Naive thymus-derived CD8-positive, alpha-beta T cell (primary cell): ENCODE measurements at regions of chr10 and their contacts with region 1.

Region 1: DNA sequence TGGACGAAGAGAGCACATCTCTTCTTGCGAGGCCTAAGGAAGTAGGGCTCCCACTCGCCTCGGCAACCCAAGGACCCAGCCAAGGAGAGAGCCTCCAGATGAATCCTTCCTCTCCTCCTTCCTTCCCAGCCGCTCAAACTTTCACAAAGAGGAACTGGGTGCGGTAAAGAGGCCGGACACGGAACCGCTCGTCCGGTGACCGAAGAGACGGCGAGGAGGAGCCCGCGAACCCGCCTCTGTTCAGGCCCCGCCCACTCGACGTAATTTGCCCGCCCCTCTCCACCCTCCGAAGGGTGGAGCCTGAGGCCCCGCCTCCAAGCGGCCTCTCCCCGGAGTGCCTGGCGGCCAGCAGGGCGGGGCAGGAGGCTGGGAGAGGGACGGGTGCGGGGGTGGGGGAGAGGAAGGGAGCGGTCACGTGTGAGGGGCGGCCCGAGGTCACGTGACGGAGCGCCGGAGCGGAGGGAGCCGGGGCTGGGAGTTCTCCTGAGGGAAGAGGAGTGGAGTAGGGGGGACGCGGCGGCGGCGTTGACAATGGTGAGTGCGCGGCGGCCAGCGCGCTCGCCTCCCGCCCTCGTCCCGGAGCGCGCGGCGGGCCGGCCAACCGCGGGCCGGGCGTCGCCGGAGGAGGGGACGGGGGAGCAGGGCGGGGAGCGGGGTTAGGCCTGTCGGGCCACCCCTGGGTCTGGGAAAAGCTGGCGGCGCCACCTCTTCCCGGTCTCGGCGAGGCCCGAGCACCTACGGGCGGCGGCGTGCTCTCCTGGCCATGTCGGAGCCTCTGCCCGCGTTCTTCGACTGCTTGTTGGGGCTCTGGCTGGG is at the start of gene VPS26A:
- DNase-seq: peak; percentile 96 to 99 (median 99)
- ATAC-seq: peak; percentile 85 to 89
- H3K4me3 Mint-ChIP-seq: peak within 1 kb of the TSS; percentile 90 to 97 (median 94)
- H3K27ac Mint-ChIP-seq: peak within 1 kb of the TSS; percentile 91 to 99 (median 98)
- H3K4me1 Mint-ChIP-seq: peaks cover 6 to 34% (median 21%) of the 10 kb centered on the region in 4 donors
- H3K27me3 Mint-ChIP-seq: no peaks in the 10 kb centered on the region
- polyA plus RNA-seq, gene VPS26A: 24.1 to 27.4 (median 24.9) TPM

Region 2: GRCh38 chr10:69107176-69107490 is 16.8 kb before region 1 on chr10:
- POLR2A ChIA-PET with region 1: interaction called, 10 read pairs
- DNase-seq: no peak
- ATAC-seq: peak in 1 of 2 donors; percentile 20
- H3K4me3 Mint-ChIP-seq: no peak overlapping the region
- H3K27ac Mint-ChIP-seq: peak overlapping the region in 3 of 10 donors; percentile 14 to 58 (median 56)
- H3K4me1 Mint-ChIP-seq: peaks cover 4 to 9% (median 5%) of the 10 kb centered on the region in 4 donors
- H3K27me3 Mint-ChIP-seq: no peaks in the 10 kb centered on the region

Region 3: GRCh38 chr10:69146759-69147158 is 22.8 kb after region 1 on chr10:
- POLR2A ChIA-PET with region 1: no interaction called
- DNase-seq: no peak
- ATAC-seq: no peak
- H3K4me3 Mint-ChIP-seq: no peak overlapping the region
- H3K27ac Mint-ChIP-seq: peak overlapping the region in 3 of 10 donors; percentile 9 to 49 (median 19)
- H3K4me1 Mint-ChIP-seq: peaks cover 17 to 49% (median 37%) of the 10 kb centered on the region in 4 donors
- H3K27me3 Mint-ChIP-seq: no peaks in the 10 kb centered on the region

Region 4: GRCh38 chr10:69222157-69223027 is 98.4 kb after region 1 on chr10:
- POLR2A ChIA-PET with region 1: no interaction called
- DNase-seq: peak in 7 of 10 donors; percentile 14 to 54 (median 49)
- ATAC-seq: peak; percentile 88 to 90
- H3K4me3 Mint-ChIP-seq: peak overlapping the region in 5 of 10 donors; percentile 14 to 63 (median 56)
- H3K27ac Mint-ChIP-seq: peak overlapping the region in 7 of 10 donors; percentile 1 to 75 (median 21)
- H3K4me1 Mint-ChIP-seq: peaks cover 2 to 33% (median 18%) of the 10 kb centered on the region in 4 donors
- H3K27me3 Mint-ChIP-seq: peaks cover 0 to 2% (median 0%) of the 10 kb centered on the region in 5 donors